ENCODE measurements at regions of chr20 and their contacts with region 1.

Region 1: DNA sequence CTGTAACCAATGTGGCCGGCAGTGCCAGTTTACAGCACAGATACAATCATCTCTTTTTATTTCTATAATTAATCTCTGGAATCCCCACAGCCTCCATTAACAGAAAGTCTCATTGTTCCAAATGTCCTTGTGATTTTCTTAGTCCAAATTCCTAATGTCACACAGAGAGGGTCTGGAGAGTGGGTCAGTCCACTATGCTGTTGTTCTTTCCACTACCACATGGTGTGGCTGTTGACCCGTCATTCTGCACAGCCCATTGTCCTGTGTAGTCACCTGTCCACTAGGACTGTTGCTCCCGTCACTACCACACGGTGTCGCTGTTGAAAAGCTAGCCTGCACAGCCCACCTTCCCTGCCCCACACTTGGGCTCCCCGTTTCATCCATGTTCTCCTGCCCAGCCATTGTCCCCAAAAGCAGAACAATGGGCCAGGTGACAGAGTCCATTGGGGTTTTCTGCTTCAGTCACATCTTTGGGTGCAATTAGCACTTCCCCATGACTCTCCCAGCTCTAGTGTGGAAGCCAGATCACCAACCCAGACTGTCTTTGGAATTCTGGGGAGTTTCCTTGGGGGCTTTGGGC is 8.6 kb upstream of the LBP start:
- DNase-seq: peak; percentile 79 to 98
- H3K4me3 ChIP-seq: no peak overlapping the region
- H3K27ac ChIP-seq: no peak overlapping the region
- H3K4me1 ChIP-seq: peaks cover 6 to 11% (median 10%) of the 10 kb centered on the region in 4 experiments
- H3K27me3 ChIP-seq: no peaks in the 10 kb centered on the region
- CTCF ChIP-seq: peak; percentile 99 to 100 (median 100)
- EP300 ChIP-seq: peak in 1 of 2 experiments; percentile 36; a peak in 1 of 3 replicates
- POLR2A ChIP-seq: no peak
- RAD21 ChIP-seq: peak; percentile 99 to 100

Region 2: GRCh38 chr20:38304845-38305447 is 32.7 kb before region 1 on chr20:
- CTCF ChIA-PET with region 1: interaction called, 10 read pairs
- POLR2A ChIA-PET with region 1: no interaction called
- DNase-seq: peak; percentile 10 to 90
- H3K4me3 ChIP-seq: no peak overlapping the region
- H3K27ac ChIP-seq: no peak overlapping the region
- H3K4me1 ChIP-seq: peaks cover 0 to 4% (median 2%) of the 10 kb centered on the region in 4 experiments; a peak in 3 of 7 replicates
- H3K27me3 ChIP-seq: no peaks in the 10 kb centered on the region; a peak in 1 of 7 replicates
- CTCF ChIP-seq: peak; percentile 78 to 86 (median 82)
- EP300 ChIP-seq: no peak
- POLR2A ChIP-seq: no peak
- RAD21 ChIP-seq: peak; percentile 61 to 71

Region 3: DNA sequence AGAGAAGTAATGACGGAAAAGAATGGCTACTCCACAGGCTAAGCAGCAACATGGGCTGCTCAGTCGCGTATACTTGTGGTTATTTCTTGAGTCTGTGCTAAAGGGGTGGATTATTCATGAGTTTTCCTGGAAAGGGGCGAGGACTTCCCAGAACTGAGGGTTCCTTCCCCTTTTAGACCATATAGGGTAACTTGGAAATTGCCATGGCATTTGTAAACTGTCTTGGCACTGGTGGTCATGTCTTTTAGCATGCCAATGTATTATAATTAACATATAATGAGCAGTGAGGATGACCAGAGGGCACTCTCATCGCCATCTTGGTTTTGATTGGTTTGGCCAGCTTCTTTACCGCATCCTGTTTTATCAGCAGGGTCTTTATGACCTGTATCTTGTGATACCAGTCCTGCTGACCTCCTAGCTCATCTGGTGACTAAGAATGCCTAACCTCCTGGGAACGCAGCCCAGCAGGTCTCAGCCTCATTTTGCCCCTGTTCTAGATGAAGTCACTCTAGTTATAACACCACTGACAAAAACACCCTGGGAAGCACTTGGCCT is 20.1 kb after region 1 on chr20:
- CTCF ChIA-PET with region 1: interaction called, 390 read pairs
- POLR2A ChIA-PET with region 1: interaction called, 11 read pairs
- DNase-seq: no peak
- H3K4me3 ChIP-seq: no peak overlapping the region
- H3K27ac ChIP-seq: no peak overlapping the region
- H3K4me1 ChIP-seq: peaks cover 2 to 23% (median 14%) of the 10 kb centered on the region in 4 experiments
- H3K27me3 ChIP-seq: no peaks in the 10 kb centered on the region
- CTCF ChIP-seq: no peak
- EP300 ChIP-seq: no peak
- POLR2A ChIP-seq: no peak
- RAD21 ChIP-seq: no peak

Region 4: DNA sequence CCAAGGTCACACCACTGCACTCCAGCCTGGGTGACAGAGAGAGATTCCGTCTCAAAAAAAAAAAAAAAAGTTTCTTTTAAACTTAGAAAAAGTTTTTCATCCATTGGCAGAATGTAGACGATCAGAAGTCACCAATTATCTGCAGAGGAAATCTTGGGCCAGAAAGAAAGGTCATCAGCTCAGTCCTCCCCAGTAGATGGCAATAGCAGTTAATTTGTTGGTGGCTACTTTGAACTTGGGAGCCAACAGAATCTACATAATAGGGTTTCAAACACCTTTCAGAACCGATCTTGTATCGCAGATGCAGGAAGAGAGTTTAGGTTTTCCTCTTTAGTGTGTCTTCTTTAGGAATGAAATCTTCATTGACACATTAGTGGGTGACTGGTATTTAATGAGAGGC is 50.3 kb after region 1 on chr20:
- CTCF ChIA-PET with region 1: interaction called, 231 read pairs
- POLR2A ChIA-PET with region 1: no interaction called
- DNase-seq: no peak
- H3K4me3 ChIP-seq: no peak overlapping the region
- H3K27ac ChIP-seq: no peak overlapping the region
- H3K4me1 ChIP-seq: peaks cover 0 to 3% (median under 1%) of the 10 kb centered on the region in 4 experiments; a peak in 1 of 7 replicates
- H3K27me3 ChIP-seq: no peaks in the 10 kb centered on the region; a peak in 1 of 7 replicates
- CTCF ChIP-seq: no peak
- EP300 ChIP-seq: no peak
- POLR2A ChIP-seq: no peak
- RAD21 ChIP-seq: peak; percentile 22 to 27; a peak in 3 of 4 replicates

Region 5: GRCh38 chr20:38412877-38413577 is 75.4 kb after region 1 on chr20:
- CTCF ChIA-PET with region 1: interaction called, 231 read pairs
- POLR2A ChIA-PET with region 1: interaction called, 8 read pairs
- DNase-seq: no peak
- H3K4me3 ChIP-seq: no peak overlapping the region
- H3K27ac ChIP-seq: no peak overlapping the region
- H3K4me1 ChIP-seq: peaks cover 0 to 5% (median 2%) of the 10 kb centered on the region in 4 experiments; a peak in 5 of 7 replicates
- H3K27me3 ChIP-seq: no peaks in the 10 kb centered on the region
- CTCF ChIP-seq: no peak
- EP300 ChIP-seq: no peak
- POLR2A ChIP-seq: no peak
- RAD21 ChIP-seq: no peak

Region 6: GRCh38 chr20:38426006-38426405 is 88.4 kb after region 1 on chr20:
- CTCF ChIA-PET with region 1: interaction called, 15 read pairs
- POLR2A ChIA-PET with region 1: interaction called, 3 read pairs
- DNase-seq: no peak
- H3K4me3 ChIP-seq: no peak overlapping the region
- H3K27ac ChIP-seq: no peak overlapping the region
- H3K4me1 ChIP-seq: no peaks in the 10 kb centered on the region; a peak in 1 of 7 replicates
- H3K27me3 ChIP-seq: no peaks in the 10 kb centered on the region
- CTCF ChIP-seq: no peak
- EP300 ChIP-seq: no peak
- POLR2A ChIP-seq: no peak
- RAD21 ChIP-seq: no peak

Measured in H1 (cell line).